Caco-2 (cell line): ENCODE measurements at regions of chr12 and their contacts with region 1.

Region 1: GRCh38 chr12:27523642-27524493 is at the start of gene PPFIBP1:
- DNase-seq: peak; percentile 99 to 100
- H3K4me3 ChIP-seq: peak within 1 kb of the TSS; percentile 62
- H3K4me3 Mint-ChIP-seq: peak within 1 kb of the TSS; percentile 80
- H3K27ac Mint-ChIP-seq: peak within 1 kb of the TSS; percentile 98
- H3K4me1 ChIP-seq: peaks cover 22% of the 10 kb centered on the region
- H3K4me1 Mint-ChIP-seq: peaks cover 30% of the 10 kb centered on the region
- H3K27me3 ChIP-seq: no peaks in the 10 kb centered on the region
- H3K27me3 Mint-ChIP-seq: no peaks in the 10 kb centered on the region
- CTCF ChIP-seq: peak; percentile 16 to 36
- total RNA-seq, gene PPFIBP1: 109 and 134 TPM in 2 replicates

Region 2: DNA sequence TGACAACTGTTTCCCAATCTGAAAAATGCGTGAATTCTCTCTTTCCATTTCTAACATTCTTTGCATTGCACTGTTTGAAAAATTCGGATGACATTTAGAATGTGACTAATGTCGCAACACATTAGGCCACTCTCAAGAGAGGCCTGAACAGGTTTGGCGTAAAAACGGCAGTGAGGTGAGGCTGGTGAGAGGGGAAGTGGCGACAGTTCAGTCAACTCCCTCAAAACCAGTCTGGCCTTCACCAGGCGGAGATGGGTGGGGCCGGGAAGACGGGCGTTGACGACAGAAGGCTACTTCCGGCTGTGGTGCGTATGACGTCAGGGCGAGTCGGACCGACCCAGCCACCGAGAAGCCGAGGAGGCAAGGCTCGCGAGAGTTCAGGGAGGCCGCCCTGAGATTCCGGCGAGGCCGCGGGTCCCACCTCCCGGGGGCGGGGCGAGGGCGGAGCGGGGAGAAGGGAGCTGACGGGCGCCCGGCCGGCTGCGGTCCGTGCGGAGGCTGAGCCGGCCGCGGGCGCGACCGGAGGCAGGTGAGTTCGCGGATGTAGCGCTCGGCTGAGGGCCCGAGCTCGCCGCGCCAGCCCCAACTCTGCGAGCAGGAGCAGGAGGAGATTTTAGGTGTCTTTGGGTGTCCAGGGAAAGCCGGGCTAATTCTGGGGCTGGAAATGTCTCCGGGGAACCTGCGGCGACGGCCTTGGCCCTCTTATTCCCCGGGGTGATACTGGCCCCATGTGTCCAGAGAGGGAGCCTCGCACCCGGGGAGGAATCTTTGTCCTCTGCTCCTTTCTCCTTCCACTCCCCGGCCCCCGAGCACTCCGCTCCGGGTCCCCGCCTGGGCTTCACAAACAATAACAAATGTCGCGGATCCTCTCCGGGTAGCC is 279.8 kb before region 1 on chr12 and contains the start of gene STK38L:
- CTCF ChIA-PET with region 1: no interaction called
- POLR2A ChIA-PET with region 1: interaction called, 3 read pairs
- intact Hi-C with region 1: loop called (anchors 1 kb)
- DNase-seq: peak; percentile 100
- H3K4me3 ChIP-seq: peak within 1 kb of the TSS; percentile 84
- H3K4me3 Mint-ChIP-seq: peak within 1 kb of the TSS; percentile 88
- H3K27ac Mint-ChIP-seq: peak within 1 kb of the TSS; percentile 89
- H3K4me1 ChIP-seq: peaks cover 10% of the 10 kb centered on the region; the same call in 1 of the 2 replicates
- H3K4me1 Mint-ChIP-seq: peaks cover 20% of the 10 kb centered on the region
- H3K27me3 ChIP-seq: no peaks in the 10 kb centered on the region
- H3K27me3 Mint-ChIP-seq: peaks cover 3% of the 10 kb centered on the region
- CTCF ChIP-seq: peak; percentile 26 to 27
- total RNA-seq, gene STK38L: 52.0 and 59.4 TPM in 2 replicates

Region 3: DNA sequence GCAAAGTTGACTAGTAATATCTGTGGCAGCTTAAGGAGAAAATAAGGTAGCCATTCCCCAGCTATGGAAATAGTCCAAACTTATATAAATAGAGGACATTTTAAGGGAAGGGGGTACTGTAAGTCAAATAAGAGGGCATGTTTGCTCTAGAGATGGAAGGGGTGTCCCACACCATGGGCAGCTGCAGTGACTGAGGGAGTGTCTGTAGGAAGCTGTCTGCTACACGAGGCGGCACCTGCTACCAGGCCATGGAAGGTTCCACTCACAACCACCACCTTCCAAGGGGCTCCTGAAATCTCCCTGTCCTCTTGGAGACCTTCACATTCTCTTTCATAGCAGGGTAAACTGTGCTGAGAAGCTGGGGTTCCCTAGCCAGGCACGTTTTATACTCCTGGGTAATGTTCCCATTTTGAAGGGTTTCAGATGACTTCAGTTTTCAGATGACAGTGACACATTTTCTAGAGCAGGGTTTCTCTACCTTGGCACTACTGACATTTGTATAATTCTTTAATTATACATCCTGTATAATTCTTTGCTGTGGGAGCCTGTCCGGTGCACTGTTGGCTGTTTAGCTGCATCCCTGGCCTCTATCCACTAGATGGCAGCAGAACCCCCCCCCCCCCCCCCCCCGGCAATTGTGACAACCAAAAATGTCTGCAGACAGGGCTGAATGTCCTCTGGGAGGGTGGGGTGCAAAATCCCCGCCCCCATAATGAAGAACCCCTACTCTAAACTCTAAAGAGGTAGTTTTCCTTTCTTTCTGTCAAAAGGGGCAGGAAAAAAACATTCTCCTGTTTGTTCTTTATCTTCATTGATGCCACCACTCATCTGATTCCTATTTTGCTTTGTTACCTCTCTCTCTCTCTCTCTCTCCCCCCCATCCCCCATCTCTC is 88.9 kb before region 1 on chr12:
- CTCF ChIA-PET with region 1: interaction called, 17 read pairs
- POLR2A ChIA-PET with region 1: interaction called, 16 read pairs
- intact Hi-C with region 1: loop called (anchors 2 kb)
- DNase-seq: peak in 1 of 2 experiments; percentile 19
- H3K4me3 ChIP-seq: no peak overlapping the region
- H3K4me3 Mint-ChIP-seq: no peak overlapping the region
- H3K27ac Mint-ChIP-seq: no peak overlapping the region
- H3K4me1 ChIP-seq: 0 out of 2 replicates have a peak, but pooled peaks cover 3% of the 10 kb centered on the region
- H3K4me1 Mint-ChIP-seq: peaks cover 16% of the 10 kb centered on the region
- H3K27me3 ChIP-seq: no peaks in the 10 kb centered on the region
- H3K27me3 Mint-ChIP-seq: no peaks in the 10 kb centered on the region
- CTCF ChIP-seq: peak; percentile 53 to 77

Region 4: GRCh38 chr12:27561535-27562350 is 37.9 kb after region 1 on chr12:
- CTCF ChIA-PET with region 1: interaction called, 4 read pairs
- POLR2A ChIA-PET with region 1: interaction called, 10 read pairs
- intact Hi-C with region 1: loop called (anchors 2 kb)
- DNase-seq: no peak
- H3K4me3 ChIP-seq: no peak overlapping the region
- H3K4me3 Mint-ChIP-seq: no peak overlapping the region
- H3K27ac Mint-ChIP-seq: no peak overlapping the region
- H3K4me1 ChIP-seq: no peaks in the 10 kb centered on the region
- H3K4me1 Mint-ChIP-seq: peaks cover 12% of the 10 kb centered on the region
- H3K27me3 ChIP-seq: no peaks in the 10 kb centered on the region
- H3K27me3 Mint-ChIP-seq: no peaks in the 10 kb centered on the region
- CTCF ChIP-seq: no peak

Region 5: GRCh38 chr12:27635349-27635972 is 111.6 kb after region 1 on chr12:
- CTCF ChIA-PET with region 1: interaction called, 3 read pairs
- POLR2A ChIA-PET with region 1: no interaction called
- intact Hi-C with region 1: loop called (anchors 1 kb)
- DNase-seq: peak in 1 of 2 experiments; percentile 55
- H3K4me3 ChIP-seq: no peak overlapping the region
- H3K4me3 Mint-ChIP-seq: no peak overlapping the region
- H3K27ac Mint-ChIP-seq: no peak overlapping the region
- H3K4me1 ChIP-seq: peaks cover 4% of the 10 kb centered on the region; the same call in 1 of the 2 replicates
- H3K4me1 Mint-ChIP-seq: peaks cover 28% of the 10 kb centered on the region
- H3K27me3 ChIP-seq: no peaks in the 10 kb centered on the region
- H3K27me3 Mint-ChIP-seq: no peaks in the 10 kb centered on the region
- CTCF ChIP-seq: peak; percentile 69 to 83

Region 6: GRCh38 chr12:27703710-27704452 is 180.0 kb after region 1 on chr12:
- CTCF ChIA-PET with region 1: no interaction called
- POLR2A ChIA-PET with region 1: no interaction called
- intact Hi-C with region 1: loop called (anchors 5 kb)
- DNase-seq: peak; percentile 86 to 92
- H3K4me3 ChIP-seq: no peak overlapping the region
- H3K4me3 Mint-ChIP-seq: no peak overlapping the region
- H3K27ac Mint-ChIP-seq: peak overlapping the region; percentile 72
- H3K4me1 ChIP-seq: no peaks in the 10 kb centered on the region
- H3K4me1 Mint-ChIP-seq: no peaks in the 10 kb centered on the region
- H3K27me3 ChIP-seq: no peaks in the 10 kb centered on the region
- H3K27me3 Mint-ChIP-seq: no peaks in the 10 kb centered on the region
- CTCF ChIP-seq: peak; percentile 93 to 95